ENCODE measurements at regions of chr16 and their contacts with region 1.

Region 1: DNA sequence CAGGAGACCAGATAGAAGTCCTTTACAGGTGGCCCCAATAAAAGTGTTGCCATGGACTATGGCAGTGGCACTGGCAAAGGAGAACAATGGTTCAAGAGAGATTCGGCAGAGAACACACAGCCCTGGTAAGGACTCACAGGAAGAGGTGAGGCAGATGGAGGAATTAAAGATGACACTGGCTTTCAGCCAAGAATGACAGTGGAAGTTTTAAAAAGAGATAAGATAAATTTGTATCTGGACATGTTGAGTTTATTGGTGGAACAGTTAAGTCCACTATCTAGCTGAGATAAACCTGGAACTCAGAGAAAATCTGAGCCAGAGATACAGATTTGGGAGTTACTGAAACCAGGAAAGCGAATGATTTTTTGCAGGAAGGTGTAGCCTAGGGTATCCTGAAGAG is 20.1 kb downstream of the CMC2 start:
- DNase-seq: no peak
- ATAC-seq: no peak
- H3K4me3 ChIP-seq: no peak overlapping the region
- H3K27ac ChIP-seq: no peak overlapping the region
- H3K4me1 ChIP-seq: peaks cover 0 to 17% (median 6%) of the 10 kb centered on the region in 9 donors
- H3K27me3 ChIP-seq: no peaks in the 10 kb centered on the region
- CTCF ChIP-seq: no peak

Region 2: GRCh38 chr16:80931801-80932712 is 54.5 kb before region 1 on chr16:
- intact Hi-C with region 1: loop called in 2 of 10 experiments (anchors 5 to 10 kb)
- DNase-seq: peak; percentile 62 to 82
- ATAC-seq: peak; percentile 83 to 93 (median 88)
- H3K4me3 ChIP-seq: peak overlapping the region; percentile 7 to 63 (median 52)
- H3K27ac ChIP-seq: peak overlapping the region; percentile 32 to 92 (median 86)
- H3K4me1 ChIP-seq: peaks cover 0 to 21% (median 10%) of the 10 kb centered on the region in 9 donors
- H3K27me3 ChIP-seq: peaks cover 0 to 43% (median 0%) of the 10 kb centered on the region in 7 donors
- CTCF ChIP-seq: peak in 3 of 9 donors; percentile 20 to 33 (median 28)

Region 3: GRCh38 chr16:80938035-80938865 is 48.3 kb before region 1 on chr16:
- intact Hi-C with region 1: loop called in 2 of 10 experiments (anchors 5 to 10 kb)
- DNase-seq: peak in 1 of 2 donors; percentile 32
- ATAC-seq: peak in 7 of 8 donors; percentile 56 to 90 (median 70)
- H3K4me3 ChIP-seq: no peak overlapping the region
- H3K27ac ChIP-seq: peak overlapping the region in 1 of 10 donors; percentile 18
- H3K4me1 ChIP-seq: peaks cover 0 to 12% (median 7%) of the 10 kb centered on the region in 9 donors
- H3K27me3 ChIP-seq: peaks cover 0 to 16% (median 0%) of the 10 kb centered on the region in 7 donors
- CTCF ChIP-seq: no peak

Region 4: GRCh38 chr16:80954985-80955384 is 31.6 kb before region 1 on chr16:
- intact Hi-C with region 1: no loop called
- DNase-seq: no peak
- ATAC-seq: peak in 1 of 8 donors; percentile 25
- H3K4me3 ChIP-seq: no peak overlapping the region
- H3K27ac ChIP-seq: no peak overlapping the region
- H3K4me1 ChIP-seq: no peaks in the 10 kb centered on the region
- H3K27me3 ChIP-seq: no peaks in the 10 kb centered on the region
- CTCF ChIP-seq: no peak

Region 5: DNA sequence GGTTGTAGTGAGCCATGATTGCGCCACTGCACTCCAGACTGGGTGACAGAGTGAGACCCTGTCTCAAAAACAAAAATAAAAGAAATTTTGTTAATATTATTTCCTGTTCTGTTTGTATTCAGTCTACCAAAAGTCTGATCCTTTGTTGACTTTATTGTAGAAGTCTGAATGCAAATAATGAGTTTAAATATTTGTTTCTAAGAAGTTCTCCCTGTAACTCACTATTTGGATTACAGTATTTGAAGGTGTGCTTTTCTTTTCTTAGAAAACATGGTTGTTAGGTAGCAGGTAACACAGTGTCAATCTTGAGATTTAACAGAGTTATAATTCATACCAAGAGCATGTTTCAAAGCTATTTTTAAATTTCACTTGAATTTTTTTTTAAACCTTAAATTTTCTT is 363.0 kb after region 1 on chr16:
- intact Hi-C with region 1: no loop called
- DNase-seq: no peak
- ATAC-seq: no peak
- H3K4me3 ChIP-seq: no peak overlapping the region
- H3K27ac ChIP-seq: no peak overlapping the region
- H3K4me1 ChIP-seq: no peaks in the 10 kb centered on the region
- H3K27me3 ChIP-seq: no peaks in the 10 kb centered on the region
- CTCF ChIP-seq: no peak

Measured in heart right ventricle (tissue), 16 donors.